GM12878 (cell line): ENCODE measurements at regions of chr3 and their contacts with region 1.

Region 1: GRCh38 chr3:99532246-99532645 is 106.1 kb upstream of the COL8A1 start:
- DNase-seq: no peak
- ATAC-seq: peak; percentile 84
- H3K4me3 ChIP-seq: no peak overlapping the region
- H3K27ac ChIP-seq: no peak overlapping the region
- H3K4me1 ChIP-seq: no peaks in the 10 kb centered on the region
- H3K27me3 ChIP-seq: no peaks in the 10 kb centered on the region
- CTCF ChIP-seq: peak; percentile 57 to 82 (median 78)
- EP300 ChIP-seq: no peak
- POLR2A ChIP-seq: no peak
- RAD21 ChIP-seq: peak; percentile 89

Region 2: GRCh38 chr3:99023590-99024192 is 508.6 kb before region 1 on chr3:
- CTCF ChIA-PET with region 1: interaction called, 26 read pairs
- POLR2A ChIA-PET with region 1: no interaction called
- RAD21 ChIA-PET with region 1: interaction called, 6 read pairs
- SMC1A ChIA-PET with region 1: interaction called, 8 read pairs
- in situ Hi-C with region 1: no loop called
- intact Hi-C with region 1: loop called (anchors 5 kb)
- DNase-seq: no peak
- ATAC-seq: peak; percentile 60; the same call in 2 of the 3 replicates
- H3K4me3 ChIP-seq: no peak overlapping the region
- H3K27ac ChIP-seq: no peak overlapping the region
- H3K4me1 ChIP-seq: no peaks in the 10 kb centered on the region
- H3K27me3 ChIP-seq: no peaks in the 10 kb centered on the region
- CTCF ChIP-seq: peak; percentile 53 to 68 (median 60)
- EP300 ChIP-seq: no peak
- POLR2A ChIP-seq: no peak
- RAD21 ChIP-seq: peak; percentile 81

Region 3: DNA sequence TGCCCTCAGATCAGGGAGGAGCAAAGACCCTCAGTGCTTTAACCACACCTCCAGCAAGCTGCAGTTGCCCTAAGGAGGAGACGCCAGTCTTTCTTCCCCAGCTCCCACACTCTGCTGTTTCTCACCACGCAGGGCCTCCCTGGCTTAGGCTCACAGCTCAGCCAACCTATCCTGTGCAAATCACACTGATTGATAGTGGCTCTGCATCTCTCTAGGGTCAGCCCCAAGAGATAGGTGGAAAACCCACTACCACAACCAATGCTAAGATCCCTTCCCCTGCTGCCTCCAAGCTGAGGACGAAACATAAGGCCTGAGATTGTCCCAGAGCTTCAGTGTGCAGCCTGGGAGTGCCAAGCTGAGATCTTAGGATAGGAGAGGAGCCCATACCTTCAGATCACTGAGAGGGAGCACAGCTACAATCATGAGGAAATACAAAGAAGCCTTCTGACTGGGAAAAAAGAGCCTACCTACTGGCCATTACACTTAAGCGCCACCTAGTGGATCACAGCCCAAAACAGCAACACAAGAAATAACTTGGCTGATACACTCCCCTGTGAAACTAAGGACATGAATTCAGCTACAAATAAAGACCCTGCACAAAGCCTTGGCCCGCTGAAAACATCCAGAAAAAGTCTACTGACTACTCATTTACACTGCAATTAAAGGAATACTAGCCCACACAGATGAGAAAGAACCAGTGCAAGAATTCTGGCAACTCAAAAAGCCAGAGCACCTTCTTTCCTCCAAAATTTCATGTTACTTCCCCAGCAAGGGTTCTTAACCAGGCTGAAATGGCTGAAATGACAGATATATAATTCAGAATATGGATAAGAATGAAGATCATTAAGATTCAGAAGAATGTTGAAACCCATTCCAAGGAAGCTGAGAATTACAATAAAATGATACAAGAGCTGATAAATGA is 359.2 kb before region 1 on chr3:
- CTCF ChIA-PET with region 1: interaction called, 22 read pairs
- POLR2A ChIA-PET with region 1: no interaction called
- RAD21 ChIA-PET with region 1: interaction called, 3 read pairs
- SMC1A ChIA-PET with region 1: no interaction called
- in situ Hi-C with region 1: no loop called
- intact Hi-C with region 1: loop called (anchors 10 kb)
- DNase-seq: peak; percentile 9
- ATAC-seq: peak; percentile 88
- H3K4me3 ChIP-seq: no peak overlapping the region
- H3K27ac ChIP-seq: no peak overlapping the region
- H3K4me1 ChIP-seq: no peaks in the 10 kb centered on the region
- H3K27me3 ChIP-seq: no peaks in the 10 kb centered on the region
- CTCF ChIP-seq: peak; percentile 65 to 73 (median 68)
- EP300 ChIP-seq: no peak
- POLR2A ChIP-seq: no peak
- RAD21 ChIP-seq: peak; percentile 73

Region 4: DNA sequence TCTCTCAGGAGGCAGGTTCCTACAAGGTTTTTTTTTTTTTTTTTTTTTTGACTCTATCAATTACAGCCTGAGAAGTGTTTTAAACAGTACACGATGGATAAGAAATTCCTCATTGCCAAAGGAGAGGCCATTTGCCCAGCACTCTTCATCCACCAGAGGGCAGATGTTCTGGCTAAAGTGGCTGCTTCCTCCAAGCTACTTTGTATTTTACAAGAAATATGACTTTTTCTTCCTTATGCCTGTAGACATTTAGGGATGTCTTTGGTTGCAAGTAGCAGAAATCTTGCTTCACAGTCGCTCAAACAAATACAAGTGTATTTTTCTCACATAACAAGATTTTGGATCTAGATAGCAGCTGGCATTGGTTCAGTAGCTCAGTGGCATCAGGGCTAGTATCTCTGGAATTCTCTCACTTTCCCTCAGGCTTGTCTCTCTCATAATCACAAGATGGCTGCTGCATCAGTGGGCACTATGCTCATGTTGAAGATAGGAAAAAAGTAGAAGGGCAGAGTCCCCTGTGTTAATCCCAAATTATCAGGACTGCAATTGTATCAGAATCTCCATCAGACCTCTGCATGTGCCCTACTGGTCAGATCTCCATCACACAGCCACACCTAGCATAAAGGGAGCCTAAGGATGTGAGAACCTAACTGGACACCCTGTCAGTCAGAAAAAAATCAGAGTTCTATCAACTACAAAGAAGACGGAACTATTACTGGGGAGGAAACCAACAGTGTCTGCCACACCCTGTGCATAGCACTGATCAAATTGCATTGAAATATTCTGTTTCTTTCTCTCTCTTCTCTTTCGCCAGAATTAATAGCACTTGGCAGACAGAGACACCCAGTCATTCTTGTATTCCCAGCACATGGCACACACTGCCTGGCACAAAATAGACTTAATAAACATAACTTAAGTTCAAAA is 32.7 kb before region 1 on chr3:
- CTCF ChIA-PET with region 1: interaction called, 303 read pairs
- POLR2A ChIA-PET with region 1: interaction called, 3 read pairs
- RAD21 ChIA-PET with region 1: interaction called, 90 read pairs
- SMC1A ChIA-PET with region 1: interaction called, 270 read pairs
- in situ Hi-C with region 1: no loop called
- intact Hi-C with region 1: loop called (anchors 1 kb)
- DNase-seq: peak; percentile 16
- ATAC-seq: peak; percentile 87
- H3K4me3 ChIP-seq: no peak overlapping the region
- H3K27ac ChIP-seq: no peak overlapping the region
- H3K4me1 ChIP-seq: no peaks in the 10 kb centered on the region
- H3K27me3 ChIP-seq: no peaks in the 10 kb centered on the region
- CTCF ChIP-seq: peak; percentile 73 to 74 (median 74)
- EP300 ChIP-seq: no peak
- POLR2A ChIP-seq: no peak
- RAD21 ChIP-seq: peak; percentile 75

Region 5: DNA sequence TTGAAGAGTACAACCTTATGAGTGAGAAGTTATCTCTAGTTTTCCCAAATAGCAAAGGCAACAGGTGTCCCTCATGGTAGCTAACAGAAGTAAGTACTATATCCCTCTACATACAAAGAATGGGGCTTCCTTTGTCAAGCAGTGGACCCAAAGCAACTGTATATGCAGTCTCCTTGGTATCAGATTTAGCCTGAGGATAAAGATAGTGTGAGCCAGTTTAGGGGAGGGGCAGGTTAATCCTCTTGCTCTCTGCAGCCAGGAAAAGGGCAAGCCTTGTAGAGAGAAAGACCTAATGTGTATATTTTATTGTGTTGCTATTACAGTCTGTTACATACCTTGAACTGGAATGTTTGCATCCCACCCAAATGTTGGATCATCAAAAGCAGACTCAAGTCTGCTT is 11.7 kb before region 1 on chr3:
- CTCF ChIA-PET with region 1: interaction called, 11 read pairs
- POLR2A ChIA-PET with region 1: no interaction called
- RAD21 ChIA-PET with region 1: interaction called, 7 read pairs
- SMC1A ChIA-PET with region 1: interaction called, 19 read pairs
- in situ Hi-C with region 1: no loop called
- intact Hi-C with region 1: no loop called
- DNase-seq: no peak
- ATAC-seq: no peak
- H3K4me3 ChIP-seq: no peak overlapping the region
- H3K27ac ChIP-seq: no peak overlapping the region
- H3K4me1 ChIP-seq: no peaks in the 10 kb centered on the region
- H3K27me3 ChIP-seq: no peaks in the 10 kb centered on the region
- CTCF ChIP-seq: no peak
- EP300 ChIP-seq: no peak
- POLR2A ChIP-seq: no peak
- RAD21 ChIP-seq: no peak

Region 6: GRCh38 chr3:99808151-99808794 is 276.0 kb after region 1 on chr3:
- CTCF ChIA-PET with region 1: no interaction called
- POLR2A ChIA-PET with region 1: no interaction called
- RAD21 ChIA-PET with region 1: no interaction called
- SMC1A ChIA-PET with region 1: no interaction called
- in situ Hi-C with region 1: no loop called
- intact Hi-C with region 1: no loop called
- DNase-seq: no peak
- ATAC-seq: peak; percentile 58
- H3K4me3 ChIP-seq: no peak overlapping the region
- H3K27ac ChIP-seq: no peak overlapping the region
- H3K4me1 ChIP-seq: no peaks in the 10 kb centered on the region
- H3K27me3 ChIP-seq: no peaks in the 10 kb centered on the region
- CTCF ChIP-seq: peak; percentile 71 to 84 (median 79)
- EP300 ChIP-seq: no peak
- POLR2A ChIP-seq: no peak
- RAD21 ChIP-seq: peak; percentile 63